ENCODE measurements at regions of chr9 and their contacts with region 1.

Region 1: GRCh38 chr9:128863647-128864046 is 18.1 kb downstream of the KYAT1 start:
- ATAC-seq: peak in 5 of 8 experiments; percentile 15 to 97 (median 84)
- H3K4me3 ChIP-seq: no peak overlapping the region
- H3K27ac ChIP-seq: no peak overlapping the region
- H3K4me1 ChIP-seq: peaks cover 5 to 7% of the 10 kb centered on the region in 2 donors

Region 2: DNA sequence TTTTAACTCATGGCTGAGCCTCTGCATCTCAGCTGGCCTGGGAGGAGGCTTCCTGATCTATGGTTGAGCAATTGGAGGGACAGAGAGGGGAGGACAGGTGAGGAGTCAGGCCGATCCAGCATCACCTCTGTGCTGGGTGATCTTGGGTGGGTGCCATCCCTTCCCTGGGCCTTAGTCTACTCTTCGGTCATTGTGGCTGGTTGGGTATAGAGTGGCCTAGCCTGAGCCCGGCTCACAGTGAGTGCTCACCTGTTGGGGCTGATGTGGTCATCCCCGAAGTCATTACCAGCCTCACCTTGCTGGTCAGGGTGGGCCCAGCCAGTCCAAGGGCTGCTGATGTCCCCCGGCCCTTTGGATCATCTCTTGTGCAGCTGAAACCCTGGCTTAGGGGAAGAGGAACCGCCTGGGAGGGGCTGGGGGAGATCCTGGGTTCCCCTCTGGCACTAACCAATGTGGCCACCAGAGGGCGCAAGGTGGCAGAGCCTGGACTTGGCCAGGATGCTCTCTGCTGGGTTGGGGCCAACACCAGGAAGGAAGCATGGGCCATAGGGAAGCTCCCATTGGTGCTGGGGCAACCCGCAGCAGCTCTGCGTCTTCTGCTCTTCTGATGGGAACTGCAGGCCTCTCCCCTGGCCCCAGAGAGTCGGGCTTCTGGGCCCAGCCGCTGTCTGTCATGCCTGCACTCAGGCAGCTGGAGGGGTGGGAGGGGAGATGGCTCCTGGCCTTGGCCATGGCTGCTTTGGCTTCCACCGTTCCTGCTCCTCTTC is 425.1 kb before region 1 on chr9:
- in situ Hi-C with region 1: no loop called
- ATAC-seq: peak; percentile 85 to 98 (median 92)
- H3K4me3 ChIP-seq: no peak overlapping the region
- H3K27ac ChIP-seq: no peak overlapping the region
- H3K4me1 ChIP-seq: peaks cover 5 to 8% of the 10 kb centered on the region in 2 donors

Region 3: DNA sequence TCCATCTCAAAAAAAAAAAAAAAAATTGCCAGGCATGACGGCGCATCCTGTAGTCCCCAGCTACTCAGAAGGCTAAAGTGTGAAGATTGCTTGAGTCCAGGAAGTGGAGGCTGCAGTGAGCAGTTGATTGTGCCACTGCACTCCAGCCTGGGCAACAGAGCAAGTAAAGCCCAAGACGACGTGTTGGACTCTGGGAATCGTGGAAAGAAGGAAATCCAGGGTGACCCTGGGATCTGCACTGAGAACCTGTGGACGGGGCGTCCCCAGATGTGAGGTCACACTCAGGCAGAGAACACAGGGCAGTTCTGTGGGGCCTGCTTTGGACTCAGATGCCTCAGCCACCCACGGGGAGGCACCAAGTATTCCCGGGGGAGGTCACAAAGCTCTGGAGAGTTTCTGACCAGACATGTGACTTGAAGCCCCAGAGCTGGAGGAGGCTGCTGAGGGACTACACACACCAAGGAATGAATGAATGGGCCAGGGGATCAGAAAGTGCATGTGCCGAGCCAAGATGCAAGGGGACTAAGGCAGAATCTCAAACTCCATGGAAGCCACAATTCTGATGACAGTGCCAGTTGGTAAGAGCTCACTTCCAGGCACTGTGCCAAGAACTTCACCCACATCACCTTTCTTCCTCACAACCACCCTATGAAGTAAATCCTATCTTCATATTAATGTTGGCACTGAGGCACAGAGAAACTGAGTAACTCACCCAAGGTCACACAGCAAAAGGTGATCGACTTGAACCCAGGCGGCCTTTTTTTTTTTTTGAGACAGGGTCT is 219.9 kb before region 1 on chr9:
- in situ Hi-C with region 1: no loop called
- ATAC-seq: no peak
- H3K4me3 ChIP-seq: no peak overlapping the region
- H3K27ac ChIP-seq: no peak overlapping the region
- H3K4me1 ChIP-seq: no peaks in the 10 kb centered on the region

Region 4: DNA sequence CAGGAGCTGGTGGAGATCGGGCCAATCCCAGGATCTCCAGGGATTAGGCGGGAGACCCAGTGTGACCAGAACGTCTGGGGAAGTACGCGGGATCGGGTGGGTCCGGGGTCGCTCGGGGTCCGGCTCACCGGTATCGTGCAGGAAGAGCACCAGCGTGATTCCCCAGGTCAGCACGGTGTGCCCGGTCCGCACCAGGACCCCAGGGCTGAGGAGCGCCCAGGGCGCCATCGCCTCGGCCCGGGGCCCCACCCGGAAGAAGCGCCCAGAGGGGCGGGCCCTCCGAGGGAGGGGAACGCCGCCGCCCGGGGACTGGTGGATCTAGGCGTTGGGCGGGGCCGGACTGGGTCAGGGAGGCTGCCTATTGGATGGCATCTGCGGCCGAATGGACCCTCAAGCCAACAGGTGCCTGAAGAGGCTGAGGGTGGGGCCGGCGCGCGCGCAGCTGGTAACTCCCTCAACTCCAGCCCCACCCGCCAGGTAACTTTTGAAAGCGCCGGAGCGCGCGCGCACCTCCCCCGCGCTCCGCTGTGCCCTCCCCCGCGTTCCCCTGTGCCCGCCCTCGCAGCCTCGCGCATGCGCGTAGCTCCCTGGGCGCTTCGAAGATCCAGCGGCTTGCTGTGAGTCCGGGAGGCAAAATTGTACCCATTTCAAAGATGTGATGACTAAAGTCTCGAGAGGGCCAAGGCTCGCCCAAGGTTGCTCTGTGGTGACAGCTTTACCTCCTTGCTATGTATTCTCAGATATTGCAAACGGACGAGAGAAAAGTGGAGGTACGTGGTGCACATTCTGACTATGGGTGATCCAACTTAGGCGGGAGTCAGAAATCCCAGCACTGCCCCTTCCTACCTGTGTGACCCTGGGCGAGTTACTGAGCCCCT is 139.5 kb before region 1 on chr9 and contains the start of gene ZDHHC12:
- in situ Hi-C with region 1: no loop called
- ATAC-seq: peak; percentile 86 to 95 (median 90)
- H3K4me3 ChIP-seq: peak within 1 kb of the TSS; percentile 32 to 50 (median 40)
- H3K27ac ChIP-seq: no peak within 1 kb of the TSS
- H3K4me1 ChIP-seq: peaks cover 0 to 10% of the 10 kb centered on the region in 2 donors
- total RNA-seq, gene ZDHHC12: 3.7 to 31.4 (median 11.7) TPM

Region 5: GRCh38 chr9:128735373-128735772 is 128.3 kb before region 1 on chr9:
- in situ Hi-C with region 1: no loop called
- ATAC-seq: no peak
- H3K4me3 ChIP-seq: no peak overlapping the region
- H3K27ac ChIP-seq: no peak overlapping the region
- H3K4me1 ChIP-seq: no peaks in the 10 kb centered on the region

Region 6: DNA sequence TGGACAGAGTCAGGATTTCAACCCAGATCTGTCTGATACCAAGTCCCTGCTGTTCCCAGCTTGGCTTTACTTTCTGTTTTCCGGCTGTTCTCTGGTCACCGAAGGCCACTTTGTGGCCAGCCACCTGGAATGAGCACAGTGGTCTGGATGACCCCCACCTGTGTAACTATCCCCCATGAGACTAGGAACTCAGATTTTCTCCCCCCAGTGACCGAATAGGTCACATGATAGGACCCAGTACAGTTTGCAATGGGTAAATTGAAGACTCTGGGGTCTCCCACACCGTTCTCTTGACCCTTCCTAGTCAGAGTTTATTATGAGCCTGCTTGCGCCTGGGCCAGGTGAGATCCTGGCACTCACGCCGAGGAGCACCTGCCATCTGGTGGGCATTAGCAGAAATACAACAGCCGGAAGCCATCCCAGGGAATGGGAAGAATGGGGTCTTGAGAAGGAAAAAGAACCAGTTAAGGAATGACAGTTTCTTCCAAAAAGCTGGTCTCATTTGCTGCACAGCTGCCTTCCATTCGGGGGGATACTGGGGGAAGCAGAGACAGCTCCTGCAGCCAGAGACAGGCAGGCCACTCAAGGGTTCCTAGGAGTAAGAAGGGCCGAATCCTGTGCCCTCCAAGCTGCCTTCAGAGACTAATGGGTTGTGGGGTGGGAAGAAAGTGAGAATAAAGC is 64.2 kb after region 1 on chr9:
- in situ Hi-C with region 1: loop called in 1 of 9 experiments (anchors 10 kb)
- ATAC-seq: peak; percentile 71 to 94 (median 87)
- H3K4me3 ChIP-seq: no peak overlapping the region
- H3K27ac ChIP-seq: no peak overlapping the region
- H3K4me1 ChIP-seq: no peaks in the 10 kb centered on the region